Left ventricle myocardium superior (tissue), 1 donor: ENCODE measurements at regions of chr5 and their contacts with region 1.

Region 1: GRCh38 chr5:153147891-153148623 is 342.4 kb upstream of the GRIA1 start:
- DNase-seq: no peak
- ATAC-seq: peak; percentile 75

Region 2: GRCh38 chr5:152560512-152561137 is 587.4 kb before region 1 on chr5:
- intact Hi-C with region 1: loop called (anchors 5 kb)
- DNase-seq: peak; percentile 81
- ATAC-seq: peak; percentile 57

Region 3: GRCh38 chr5:152723482-152723881 is 424.6 kb before region 1 on chr5:
- intact Hi-C with region 1: no loop called
- DNase-seq: no peak
- ATAC-seq: no peak

Region 4: DNA sequence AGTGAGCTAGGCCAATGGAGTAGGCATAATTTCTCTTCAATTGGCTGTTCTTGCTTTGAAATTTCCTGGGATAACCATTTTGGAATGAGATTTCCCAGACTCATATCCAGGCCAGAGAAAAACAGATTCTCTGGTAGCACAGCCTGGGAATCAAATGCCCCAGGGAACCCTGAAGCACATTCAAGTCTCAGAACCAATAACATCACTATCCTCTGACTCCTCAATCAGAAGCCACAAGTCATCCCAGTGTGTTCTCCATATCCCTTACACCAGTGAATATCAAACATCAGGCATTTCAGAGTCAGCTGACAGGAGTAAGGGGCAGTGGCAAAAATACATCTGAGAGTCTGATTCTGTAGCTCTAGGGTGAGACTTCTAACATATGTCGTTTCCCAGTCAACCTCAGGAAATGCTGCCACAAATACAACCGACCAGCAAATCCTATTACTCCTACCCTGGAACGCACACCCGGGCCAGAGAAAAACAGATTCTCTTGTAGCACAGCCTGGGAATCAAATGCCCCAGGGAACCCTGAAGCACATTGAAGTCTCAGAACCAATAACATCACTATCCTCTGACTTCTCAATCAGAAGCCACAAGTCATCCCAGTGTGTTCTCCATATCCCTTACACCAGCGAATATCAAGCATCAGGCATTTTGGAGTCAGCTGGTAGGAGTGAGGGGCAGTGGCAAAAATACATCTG is 205.3 kb before region 1 on chr5:
- intact Hi-C with region 1: no loop called
- DNase-seq: no peak
- ATAC-seq: peak; percentile 57

Region 5: GRCh38 chr5:153390569-153390968 is 242.5 kb after region 1 on chr5:
- intact Hi-C with region 1: no loop called
- DNase-seq: no peak
- ATAC-seq: no peak